ENCODE measurements at regions of chr20 and their contacts with region 1.

Region 1: DNA sequence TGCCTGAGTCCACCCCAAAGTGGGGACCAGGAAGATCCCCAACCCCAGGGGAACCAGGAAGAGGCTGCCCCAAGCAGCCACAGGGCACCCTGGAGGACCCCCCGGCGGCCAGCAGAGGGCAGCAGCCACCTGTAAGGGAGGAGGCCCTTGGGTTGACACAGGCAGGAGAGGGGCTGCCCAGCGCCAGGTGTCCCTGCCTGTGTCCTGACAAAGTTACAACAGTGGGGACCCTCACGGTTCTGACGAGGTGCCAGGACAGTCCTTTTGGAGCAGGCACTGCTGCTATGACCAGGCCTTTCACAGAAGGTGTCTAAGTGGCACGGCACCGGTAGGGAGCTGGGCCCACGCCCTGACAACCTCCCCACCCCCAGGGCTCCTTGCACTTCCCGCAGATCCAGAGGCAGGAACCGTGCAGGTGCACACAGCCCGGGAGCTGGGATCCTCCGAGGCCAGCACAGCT is 176.7 kb downstream of the BMP7 start:
- DNase-seq: peak; percentile 79
- ATAC-seq: peak; percentile 74
- H3K4me3 Mint-ChIP-seq: no peak overlapping the region
- H3K27ac Mint-ChIP-seq: no peak overlapping the region
- H3K4me1 Mint-ChIP-seq: peaks cover 10% of the 10 kb centered on the region
- H3K27me3 Mint-ChIP-seq: peaks cover 11% of the 10 kb centered on the region
- CTCF ChIP-seq: peak; percentile 90

Region 2: GRCh38 chr20:57079031-57080005 is 10.4 kb before region 1 on chr20:
- CTCF ChIA-PET with region 1: no interaction called
- POLR2A ChIA-PET with region 1: no interaction called
- intact Hi-C with region 1: no loop called
- DNase-seq: no peak
- ATAC-seq: no peak
- H3K4me3 Mint-ChIP-seq: no peak overlapping the region
- H3K27ac Mint-ChIP-seq: no peak overlapping the region
- H3K4me1 Mint-ChIP-seq: no peaks in the 10 kb centered on the region
- H3K27me3 Mint-ChIP-seq: peaks cover 3% of the 10 kb centered on the region
- CTCF ChIP-seq: no peak

Region 3: GRCh38 chr20:57153238-57153905 is 63.7 kb after region 1 on chr20:
- CTCF ChIA-PET with region 1: no interaction called
- POLR2A ChIA-PET with region 1: no interaction called
- intact Hi-C with region 1: no loop called
- DNase-seq: no peak
- ATAC-seq: no peak
- H3K4me3 Mint-ChIP-seq: no peak overlapping the region
- H3K27ac Mint-ChIP-seq: no peak overlapping the region
- H3K4me1 Mint-ChIP-seq: no peaks in the 10 kb centered on the region
- H3K27me3 Mint-ChIP-seq: peaks cover 3% of the 10 kb centered on the region
- CTCF ChIP-seq: no peak

Region 4: GRCh38 chr20:57329608-57330221 is 240.0 kb after region 1 on chr20 and contains the start of gene SPO11:
- CTCF ChIA-PET with region 1: interaction called, 29 read pairs
- POLR2A ChIA-PET with region 1: no interaction called
- intact Hi-C with region 1: no loop called
- DNase-seq: no peak
- ATAC-seq: no peak
- H3K4me3 Mint-ChIP-seq: no peak within 1 kb of the TSS
- H3K27ac Mint-ChIP-seq: no peak within 1 kb of the TSS
- H3K4me1 Mint-ChIP-seq: no peaks in the 10 kb centered on the region
- H3K27me3 Mint-ChIP-seq: peaks cover 9% of the 10 kb centered on the region
- CTCF ChIP-seq: no peak
- total RNA-seq, gene SPO11: not detected

Measured in activated CD8-positive, alpha-beta T cell treated with anti-CD3 and anti-CD28 coated beads for 36 hours (primary cell).